Adrenal gland (tissue), 19 donors: ENCODE measurements at regions of chr16 and their contacts with region 1.

Region 1: GRCh38 chr16:53054670-53055485 is at the start of gene CHD9:
- DNase-seq: peak; percentile 80 to 92 (median 87)
- H3K4me3 ChIP-seq: peak within 1 kb of the TSS; percentile 5 to 95 (median 82)
- H3K27ac ChIP-seq: peak within 1 kb of the TSS; percentile 51 to 96 (median 91)
- H3K4me1 ChIP-seq: peaks cover 26 to 44% of the 10 kb centered on the region in 2 donors
- H3K27me3 ChIP-seq: no peaks in the 10 kb centered on the region
- CTCF ChIP-seq: peak; percentile 92 to 100 (median 100)
- POLR2A ChIP-seq: peak in 1 of 2 donors; percentile 48
- total RNA-seq, gene CHD9: 28.3 to 95.9 (median 62.9) TPM

Region 2: GRCh38 chr16:53007095-53007494 is 47.8 kb before region 1 on chr16:
- intact Hi-C with region 1: no loop called
- DNase-seq: no peak
- H3K4me3 ChIP-seq: no peak overlapping the region
- H3K27ac ChIP-seq: no peak overlapping the region
- H3K4me1 ChIP-seq: no peaks in the 10 kb centered on the region
- H3K27me3 ChIP-seq: no peaks in the 10 kb centered on the region
- CTCF ChIP-seq: no peak
- POLR2A ChIP-seq: no peak

Region 3: GRCh38 chr16:53091466-53092211 is 36.8 kb after region 1 on chr16:
- intact Hi-C with region 1: loop called in 1 of 2 experiments (anchors 5 kb)
- DNase-seq: peak; percentile 45 to 83 (median 70)
- H3K4me3 ChIP-seq: no peak overlapping the region
- H3K27ac ChIP-seq: peak overlapping the region in 4 of 5 donors; percentile 75 to 92 (median 80)
- H3K4me1 ChIP-seq: peaks cover 66 to 68% of the 10 kb centered on the region in 2 donors
- H3K27me3 ChIP-seq: no peaks in the 10 kb centered on the region
- CTCF ChIP-seq: no peak
- POLR2A ChIP-seq: peak in 1 of 2 donors; percentile 43

Region 4: GRCh38 chr16:53130159-53131049 is 75.5 kb after region 1 on chr16:
- intact Hi-C with region 1: loop called (anchors 2 to 10 kb)
- DNase-seq: peak; percentile 97 to 99 (median 98)
- H3K4me3 ChIP-seq: peak overlapping the region; percentile 36 to 93 (median 73)
- H3K27ac ChIP-seq: peak overlapping the region; percentile 76 to 96 (median 87)
- H3K4me1 ChIP-seq: peaks cover 4 to 45% of the 10 kb centered on the region in 2 donors
- H3K27me3 ChIP-seq: no peaks in the 10 kb centered on the region
- CTCF ChIP-seq: peak in 4 of 6 experiments; percentile 5 to 96 (median 76)
- POLR2A ChIP-seq: peak in 1 of 2 donors; percentile 71

Region 5: DNA sequence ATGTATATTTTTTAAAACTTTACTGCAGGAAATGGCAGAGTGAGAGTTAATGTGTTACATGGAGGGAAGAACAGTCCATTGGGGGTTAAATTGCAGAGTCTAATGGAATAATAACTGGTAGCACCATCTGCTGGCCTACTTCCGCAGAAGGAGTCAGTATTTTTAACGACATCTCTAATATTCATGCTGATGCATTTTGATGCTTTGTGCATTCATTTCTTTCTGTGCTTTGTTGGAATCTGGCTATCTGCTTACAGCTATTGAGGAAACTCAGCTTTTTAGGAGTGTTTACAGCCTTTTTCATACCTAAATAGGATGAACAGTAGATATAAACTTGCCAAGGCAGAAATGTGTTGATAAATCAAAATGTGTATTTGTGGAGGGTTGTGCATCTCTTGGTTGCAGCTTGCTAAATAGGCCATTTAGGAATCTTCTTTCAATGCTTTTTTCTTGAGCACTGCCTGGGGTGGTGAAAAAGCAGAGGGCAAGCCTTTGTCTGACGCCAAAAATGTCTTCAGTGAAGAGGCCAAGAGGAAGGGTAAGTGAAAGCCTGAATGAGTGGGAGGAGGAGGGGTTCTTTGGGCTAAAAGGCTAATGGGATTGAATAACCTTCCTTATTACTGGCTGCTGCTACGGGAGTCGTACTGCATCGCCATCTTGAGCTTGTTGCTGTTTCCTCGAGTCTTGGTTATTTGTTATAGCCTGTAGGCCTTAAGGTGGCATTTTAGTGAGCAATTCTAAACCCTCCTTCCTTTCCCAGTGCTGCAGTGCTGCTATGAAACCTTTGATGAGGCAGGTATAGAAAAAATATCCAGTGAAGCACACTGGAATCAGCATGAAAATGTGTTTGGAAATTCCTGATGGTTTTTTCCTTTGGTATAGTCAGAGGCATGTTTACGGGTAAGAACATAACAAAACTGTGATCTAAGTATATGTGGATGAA is 153.2 kb after region 1 on chr16:
- intact Hi-C with region 1: loop called in 1 of 2 experiments (anchors 10 kb)
- DNase-seq: peak; percentile 48 to 80 (median 63)
- H3K4me3 ChIP-seq: peak overlapping the region; percentile 15 to 70 (median 53)
- H3K27ac ChIP-seq: peak overlapping the region; percentile 73 to 95 (median 89)
- H3K4me1 ChIP-seq: peaks cover 31 to 58% of the 10 kb centered on the region in 2 donors
- H3K27me3 ChIP-seq: no peaks in the 10 kb centered on the region
- CTCF ChIP-seq: peak; percentile 32 to 81 (median 66)
- POLR2A ChIP-seq: peak in 1 of 2 donors; percentile 58